ENCODE measurements at regions of chr18 and their contacts with region 1.

Region 1: DNA sequence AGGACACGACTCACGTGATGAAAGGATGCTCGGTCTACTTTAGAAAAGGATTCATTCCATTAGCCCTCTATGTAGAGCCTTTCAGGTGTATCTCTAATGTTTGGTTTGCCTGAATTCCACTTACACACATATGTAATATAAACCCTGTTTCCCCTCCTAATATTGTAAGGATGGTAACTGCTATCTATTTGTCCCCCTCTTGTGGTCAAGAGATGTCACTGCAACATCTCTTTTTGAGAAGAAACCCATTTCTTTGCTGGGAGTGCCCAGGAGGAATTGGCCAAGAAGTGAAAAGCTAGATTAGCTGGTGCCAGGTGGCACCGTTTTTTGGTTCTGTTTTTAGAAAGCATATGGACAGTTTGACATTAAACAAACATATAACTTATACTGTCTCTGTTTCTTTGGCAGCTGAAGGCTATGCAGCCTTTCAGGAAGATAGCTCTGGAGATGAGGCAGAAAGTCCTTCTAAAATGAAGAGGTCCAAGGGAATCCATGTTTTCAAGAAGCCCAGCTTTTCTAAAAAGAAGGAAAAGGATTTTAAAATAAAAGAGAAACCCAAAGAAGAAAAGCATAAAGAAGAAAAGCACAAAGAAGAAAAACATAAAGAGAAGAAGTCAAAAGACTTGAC is 41.2 kb downstream of the RALBP1 start:
- DNase-seq: peak in 4 of 14 experiments; percentile 18 to 62 (median 56)
- ATAC-seq: peak; percentile 65
- H3K4me3 ChIP-seq: no peak overlapping the region
- H3K4me3 Mint-ChIP-seq: no peak overlapping the region
- H3K27ac ChIP-seq: no peak overlapping the region
- H3K27ac Mint-ChIP-seq: no peak overlapping the region
- H3K4me1 ChIP-seq: no peaks in the 10 kb centered on the region
- H3K4me1 Mint-ChIP-seq: peaks cover 12% of the 10 kb centered on the region
- H3K27me3 ChIP-seq: no peaks in the 10 kb centered on the region
- H3K27me3 Mint-ChIP-seq: no peaks in the 10 kb centered on the region
- CTCF ChIP-seq: peak; percentile 96

Region 2: GRCh38 chr18:8654503-8655451 is 861.8 kb before region 1 on chr18:
- CTCF ChIA-PET with region 1: no interaction called
- POLR2A ChIA-PET with region 1: no interaction called
- intact Hi-C with region 1: loop called (anchors 1 to 10 kb)
- DNase-seq: peak in 3 of 14 experiments; percentile 33 to 43 (median 33)
- ATAC-seq: peak; percentile 51
- H3K4me3 ChIP-seq: no peak overlapping the region
- H3K4me3 Mint-ChIP-seq: no peak overlapping the region
- H3K27ac ChIP-seq: no peak overlapping the region
- H3K27ac Mint-ChIP-seq: no peak overlapping the region
- H3K4me1 ChIP-seq: no peaks in the 10 kb centered on the region
- H3K4me1 Mint-ChIP-seq: no peaks in the 10 kb centered on the region
- H3K27me3 ChIP-seq: no peaks in the 10 kb centered on the region
- H3K27me3 Mint-ChIP-seq: peaks cover 20% of the 10 kb centered on the region
- CTCF ChIP-seq: peak; percentile 94

Region 3: GRCh38 chr18:9147440-9148202 is 368.9 kb before region 1 on chr18:
- CTCF ChIA-PET with region 1: no interaction called
- POLR2A ChIA-PET with region 1: no interaction called
- intact Hi-C with region 1: loop called in 1 of 2 experiments (anchors 5 kb)
- DNase-seq: peak in 7 of 14 experiments; percentile 18 to 81 (median 44)
- ATAC-seq: peak; percentile 74
- H3K4me3 ChIP-seq: no peak overlapping the region
- H3K4me3 Mint-ChIP-seq: no peak overlapping the region
- H3K27ac ChIP-seq: no peak overlapping the region
- H3K27ac Mint-ChIP-seq: peak overlapping the region; percentile 10
- H3K4me1 ChIP-seq: peaks cover 28% of the 10 kb centered on the region
- H3K4me1 Mint-ChIP-seq: peaks cover 85% of the 10 kb centered on the region
- H3K27me3 ChIP-seq: no peaks in the 10 kb centered on the region
- H3K27me3 Mint-ChIP-seq: no peaks in the 10 kb centered on the region
- CTCF ChIP-seq: peak; percentile 76